AG04450 (cell line): ENCODE measurements at regions of chr18 and their contacts with region 1.

Region 1: DNA sequence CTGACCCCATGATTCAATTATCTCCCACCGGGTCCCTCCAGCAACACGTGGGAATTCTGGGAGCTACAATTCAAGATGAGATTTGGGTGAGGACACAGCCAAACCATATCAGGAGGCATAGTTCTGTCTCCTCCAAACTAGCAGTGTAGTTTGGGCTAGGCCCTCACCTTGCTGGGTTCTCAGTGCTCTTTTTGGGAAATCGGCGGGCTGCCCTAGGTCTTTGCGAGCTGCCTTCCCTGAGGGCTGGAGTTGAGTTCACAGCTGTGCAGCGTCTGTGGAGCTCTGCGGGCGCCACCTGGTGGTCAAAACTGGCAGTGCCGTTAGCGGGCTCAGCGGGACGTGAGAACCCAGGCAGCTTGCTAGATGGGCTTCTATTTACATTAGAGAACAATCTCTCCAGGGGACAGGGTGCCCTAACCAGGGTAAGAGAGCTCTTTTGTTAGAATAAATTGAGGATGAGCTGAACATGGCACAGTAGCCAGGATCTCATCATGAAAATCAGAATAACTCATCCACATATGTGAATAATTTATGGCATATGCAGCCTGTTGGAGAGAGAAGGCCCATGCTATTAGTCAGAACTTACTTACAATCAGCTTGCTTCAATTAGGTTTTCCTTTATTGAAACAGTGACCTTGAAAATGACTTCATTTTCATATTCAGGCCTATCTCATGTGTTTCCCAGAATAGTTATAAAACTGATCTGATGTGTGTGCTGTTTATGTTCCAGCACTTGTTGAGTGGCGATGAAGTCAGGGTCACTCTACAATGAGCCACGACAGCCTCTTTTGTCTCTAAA is 27.4 kb upstream of the YES1 start:
- DNase-seq: peak; percentile 45
- H3K4me3 ChIP-seq: no peak overlapping the region
- H3K27ac ChIP-seq: no peak overlapping the region
- H3K27me3 ChIP-seq: no peaks in the 10 kb centered on the region
- CTCF ChIP-seq: peak; percentile 99

Region 2: GRCh38 chr18:623761-624620 is 215.4 kb before region 1 on chr18:
- CTCF ChIA-PET with region 1: interaction called, 129 read pairs
- POLR2A ChIA-PET with region 1: no interaction called
- DNase-seq: peak; percentile 56
- H3K4me3 ChIP-seq: no peak overlapping the region
- H3K27ac ChIP-seq: no peak overlapping the region
- H3K27me3 ChIP-seq: peaks cover 32% of the 10 kb centered on the region
- CTCF ChIP-seq: peak; percentile 77

Region 3: GRCh38 chr18:754666-755065 is 84.8 kb before region 1 on chr18:
- CTCF ChIA-PET with region 1: interaction called, 10 read pairs
- POLR2A ChIA-PET with region 1: interaction called, 5 read pairs
- DNase-seq: no peak
- H3K4me3 ChIP-seq: no peak overlapping the region
- H3K27ac ChIP-seq: no peak overlapping the region
- H3K27me3 ChIP-seq: no peaks in the 10 kb centered on the region
- CTCF ChIP-seq: no peak

Region 4: GRCh38 chr18:824179-824578 is 15.2 kb before region 1 on chr18:
- CTCF ChIA-PET with region 1: interaction called, 88 read pairs
- POLR2A ChIA-PET with region 1: no interaction called
- DNase-seq: no peak
- H3K4me3 ChIP-seq: no peak overlapping the region
- H3K27ac ChIP-seq: no peak overlapping the region
- H3K27me3 ChIP-seq: no peaks in the 10 kb centered on the region
- CTCF ChIP-seq: no peak

Region 5: GRCh38 chr18:864872-865273 is 25.4 kb after region 1 on chr18:
- CTCF ChIA-PET with region 1: interaction called, 11 read pairs
- POLR2A ChIA-PET with region 1: no interaction called
- DNase-seq: peak; percentile 39
- H3K4me3 ChIP-seq: no peak overlapping the region
- H3K27ac ChIP-seq: no peak overlapping the region
- H3K27me3 ChIP-seq: peaks cover 7% of the 10 kb centered on the region
- CTCF ChIP-seq: peak; percentile 100

Region 6: GRCh38 chr18:1048032-1048431 is 208.6 kb after region 1 on chr18:
- CTCF ChIA-PET with region 1: no interaction called
- POLR2A ChIA-PET with region 1: no interaction called
- DNase-seq: no peak
- H3K4me3 ChIP-seq: no peak overlapping the region
- H3K27ac ChIP-seq: no peak overlapping the region
- H3K27me3 ChIP-seq: no peaks in the 10 kb centered on the region
- CTCF ChIP-seq: no peak